ENCODE measurements at regions of chr11 and their contacts with region 1.

Region 1: GRCh38 chr11:75031771-75032549 is 43.2 kb downstream of the NEU3 start:
- DNase-seq: peak; percentile 83 to 84
- H3K4me3 ChIP-seq: no peak overlapping the region
- H3K27ac ChIP-seq: no peak overlapping the region
- H3K4me1 ChIP-seq: no peaks in the 10 kb centered on the region
- H3K27me3 ChIP-seq: no peaks in the 10 kb centered on the region
- CTCF ChIP-seq: peak in 5 of 7 experiments; percentile 52 to 71 (median 63)
- EP300 ChIP-seq: no peak
- POLR2A ChIP-seq: no peak

Region 2: GRCh38 chr11:74937696-74938475 is 94.1 kb before region 1 on chr11:
- intact Hi-C with region 1: loop called (anchors 5 kb)
- DNase-seq: no peak
- H3K4me3 ChIP-seq: no peak overlapping the region
- H3K27ac ChIP-seq: no peak overlapping the region
- H3K4me1 ChIP-seq: peaks cover 0 to 12% (median 6%) of the 10 kb centered on the region in 4 donors
- H3K27me3 ChIP-seq: no peaks in the 10 kb centered on the region
- CTCF ChIP-seq: no peak
- EP300 ChIP-seq: no peak
- POLR2A ChIP-seq: no peak

Measured in stomach (tissue), 19 donors.